ENCODE measurements at regions of chr2 and their contacts with region 1.

Region 1: DNA sequence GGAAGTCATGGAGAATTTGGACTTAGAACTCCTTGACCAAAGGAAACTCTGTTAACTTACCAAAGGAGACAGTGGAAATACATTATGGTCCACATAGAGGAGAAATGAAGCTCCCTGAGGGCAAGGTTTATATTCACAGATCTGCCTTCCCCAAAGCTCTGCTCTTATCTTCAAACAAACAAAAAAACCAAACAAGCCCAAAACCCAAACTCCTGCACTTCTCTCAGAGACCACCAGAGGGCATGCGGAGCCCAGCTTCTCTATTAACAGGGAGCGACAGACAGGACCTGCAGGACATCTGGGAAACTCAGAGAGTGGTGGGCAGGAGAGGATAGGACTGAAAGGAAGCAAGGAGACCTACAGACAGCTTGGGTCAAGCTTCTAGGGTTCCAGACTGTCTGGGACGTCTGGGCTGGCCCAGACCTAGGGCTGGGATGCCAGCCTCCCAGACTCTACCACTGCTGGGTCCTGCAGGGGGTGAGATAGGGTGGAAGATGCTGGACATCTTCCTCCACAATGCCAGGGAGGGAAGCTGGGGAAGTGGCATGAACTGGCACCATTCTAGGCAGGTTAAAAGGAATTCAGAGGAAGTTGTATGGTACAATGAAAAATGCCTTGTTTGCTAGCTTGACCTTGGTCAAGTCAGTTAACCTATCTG is 4.0 kb upstream of the WNT10A start:
- DNase-seq: peak; percentile 72 to 83 (median 76)
- H3K4me3 ChIP-seq: no peak overlapping the region
- H3K4me3 Mint-ChIP-seq: peak overlapping the region in 3 of 8 donors; percentile 15 to 62 (median 29)
- H3K27ac ChIP-seq: no peak overlapping the region
- H3K27ac Mint-ChIP-seq: peak overlapping the region; percentile 32 to 86 (median 65)
- H3K4me1 ChIP-seq: peaks cover 55% of the 10 kb centered on the region
- H3K4me1 Mint-ChIP-seq: peaks cover 29 to 61% (median 41%) of the 10 kb centered on the region in 4 donors
- H3K27me3 ChIP-seq: peaks cover 26% of the 10 kb centered on the region
- H3K27me3 Mint-ChIP-seq: peaks cover 22 to 30% of the 10 kb centered on the region in 2 donors

Region 2: GRCh38 chr2:218710687-218711549 is 165.8 kb before region 1 on chr2 and contains the start of gene TTLL4:
- CTCF ChIA-PET with region 1: no interaction called
- POLR2A ChIA-PET with region 1: interaction called, 9 read pairs
- intact Hi-C with region 1: loop called (anchors 1 kb)
- DNase-seq: peak; percentile 98 to 99 (median 99)
- H3K4me3 ChIP-seq: peak within 1 kb of the TSS; percentile 55 to 78
- H3K4me3 Mint-ChIP-seq: peak within 1 kb of the TSS; percentile 88 to 98 (median 95)
- H3K27ac ChIP-seq: peak within 1 kb of the TSS; percentile 81
- H3K27ac Mint-ChIP-seq: peak within 1 kb of the TSS; percentile 79 to 96 (median 93)
- H3K4me1 ChIP-seq: peaks cover 16% of the 10 kb centered on the region
- H3K4me1 Mint-ChIP-seq: peaks cover 14 to 26% (median 18%) of the 10 kb centered on the region in 4 donors
- H3K27me3 ChIP-seq: no peaks in the 10 kb centered on the region
- H3K27me3 Mint-ChIP-seq: peaks cover 0 to under 1% of the 10 kb centered on the region in 2 donors
- total RNA-seq, gene TTLL4: 23.1 to 26.1 TPM

Region 3: GRCh38 chr2:218861645-218862318 is 14.9 kb before region 1 on chr2:
- CTCF ChIA-PET with region 1: interaction called, 10 read pairs
- POLR2A ChIA-PET with region 1: no interaction called
- intact Hi-C with region 1: no loop called
- DNase-seq: no peak
- H3K4me3 ChIP-seq: no peak overlapping the region
- H3K4me3 Mint-ChIP-seq: peak overlapping the region in 4 of 8 donors; percentile 14 to 74 (median 24)
- H3K27ac ChIP-seq: no peak overlapping the region
- H3K27ac Mint-ChIP-seq: no peak overlapping the region
- H3K4me1 ChIP-seq: peaks cover 22% of the 10 kb centered on the region
- H3K4me1 Mint-ChIP-seq: peaks cover 12 to 32% (median 17%) of the 10 kb centered on the region in 4 donors
- H3K27me3 ChIP-seq: peaks cover 36% of the 10 kb centered on the region
- H3K27me3 Mint-ChIP-seq: peaks cover 44 to 65% of the 10 kb centered on the region in 2 donors

Region 4: GRCh38 chr2:218892693-218893348 is 16.1 kb after region 1 on chr2:
- CTCF ChIA-PET with region 1: interaction called, 1,167 read pairs
- POLR2A ChIA-PET with region 1: interaction called, 667 read pairs
- intact Hi-C with region 1: loop called (anchors 1 kb)
- DNase-seq: peak; percentile 89 to 96 (median 92)
- H3K4me3 ChIP-seq: peak overlapping the region; percentile 9 to 61
- H3K4me3 Mint-ChIP-seq: peak overlapping the region; percentile 76 to 87 (median 80)
- H3K27ac ChIP-seq: peak overlapping the region; percentile 93
- H3K27ac Mint-ChIP-seq: peak overlapping the region; percentile 94 to 99 (median 98)
- H3K4me1 ChIP-seq: peaks cover 66% of the 10 kb centered on the region
- H3K4me1 Mint-ChIP-seq: peaks cover 40 to 76% (median 50%) of the 10 kb centered on the region in 4 donors
- H3K27me3 ChIP-seq: no peaks in the 10 kb centered on the region
- H3K27me3 Mint-ChIP-seq: no peaks in the 10 kb centered on the region

Region 5: GRCh38 chr2:218898109-218898878 is 21.6 kb after region 1 on chr2:
- CTCF ChIA-PET with region 1: interaction called, 1,167 read pairs
- POLR2A ChIA-PET with region 1: interaction called, 667 read pairs
- intact Hi-C with region 1: loop called (anchors 1 kb)
- DNase-seq: peak; percentile 70 to 80 (median 71)
- H3K4me3 ChIP-seq: peak overlapping the region in 1 of 2 donors; percentile 64
- H3K4me3 Mint-ChIP-seq: peak overlapping the region; percentile 81 to 97 (median 84)
- H3K27ac ChIP-seq: peak overlapping the region; percentile 93
- H3K27ac Mint-ChIP-seq: peak overlapping the region; percentile 85 to 99 (median 95)
- H3K4me1 ChIP-seq: peaks cover 54% of the 10 kb centered on the region
- H3K4me1 Mint-ChIP-seq: peaks cover 33 to 49% (median 42%) of the 10 kb centered on the region in 4 donors
- H3K27me3 ChIP-seq: no peaks in the 10 kb centered on the region
- H3K27me3 Mint-ChIP-seq: peaks cover 8 to 17% of the 10 kb centered on the region in 2 donors

Region 6: GRCh38 chr2:218908721-218909619 is 32.3 kb after region 1 on chr2:
- CTCF ChIA-PET with region 1: interaction called, 1,167 read pairs
- POLR2A ChIA-PET with region 1: interaction called, 4 read pairs
- intact Hi-C with region 1: no loop called
- DNase-seq: peak; percentile 86 to 91 (median 87)
- H3K4me3 ChIP-seq: peak overlapping the region; percentile 64 to 68
- H3K4me3 Mint-ChIP-seq: peak overlapping the region; percentile 82 to 89 (median 87)
- H3K27ac ChIP-seq: peak overlapping the region; percentile 35
- H3K27ac Mint-ChIP-seq: peak overlapping the region; percentile 79 to 93 (median 84)
- H3K4me1 ChIP-seq: peaks cover 12% of the 10 kb centered on the region
- H3K4me1 Mint-ChIP-seq: peaks cover 1 to 22% (median 10%) of the 10 kb centered on the region in 4 donors
- H3K27me3 ChIP-seq: no peaks in the 10 kb centered on the region
- H3K27me3 Mint-ChIP-seq: peaks cover 7 to 15% of the 10 kb centered on the region in 2 donors

Region 7: DNA sequence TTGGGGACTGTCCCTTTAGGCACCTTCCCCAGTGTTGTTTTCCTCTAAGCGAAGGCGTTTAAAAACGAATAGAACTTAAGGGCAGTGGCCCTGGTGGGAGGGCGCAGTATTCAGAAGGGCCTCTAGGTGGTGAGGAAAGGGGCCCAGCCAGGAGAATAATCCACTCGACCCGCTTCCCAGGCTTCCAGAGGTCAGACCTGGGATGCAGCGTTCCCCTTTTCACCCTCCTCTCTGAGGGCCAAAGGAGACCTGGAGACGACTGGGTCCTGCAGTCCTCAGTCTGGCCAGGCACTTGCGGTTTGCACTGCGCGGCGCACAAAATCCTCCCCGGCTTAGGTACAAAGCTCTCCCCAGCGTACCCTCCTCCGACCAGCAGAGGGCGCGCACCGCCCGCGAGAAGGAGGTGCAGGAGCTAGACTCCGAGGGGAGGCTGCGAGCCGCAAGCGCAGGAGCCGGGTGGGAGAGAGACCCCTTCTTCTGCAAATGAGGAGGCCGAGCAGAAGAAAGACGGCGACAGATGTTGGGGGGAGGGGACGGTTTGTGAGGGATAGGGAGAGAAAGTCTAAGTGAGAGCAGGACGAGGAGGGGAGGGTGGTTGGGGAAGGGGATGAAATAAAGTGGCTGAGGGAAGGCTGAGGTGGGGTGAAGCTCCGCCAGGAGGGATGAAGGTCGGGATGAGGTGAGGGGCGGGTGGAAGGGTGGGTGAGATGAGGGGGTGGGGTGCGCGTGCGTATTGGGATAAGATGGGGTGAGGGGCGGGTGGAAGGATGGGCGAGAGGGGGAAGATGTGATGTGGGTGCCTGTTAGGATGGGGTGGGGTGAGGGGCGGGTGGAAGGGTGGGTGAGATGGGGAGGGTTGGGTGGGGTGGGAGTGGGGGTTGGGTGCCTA is 103.4 kb after region 1 on chr2:
- CTCF ChIA-PET with region 1: interaction called, 13 read pairs
- POLR2A ChIA-PET with region 1: no interaction called
- intact Hi-C with region 1: loop called (anchors 1 kb)
- DNase-seq: peak; percentile 80 to 84 (median 83)
- H3K4me3 ChIP-seq: peak overlapping the region in 1 of 2 donors; percentile 27
- H3K4me3 Mint-ChIP-seq: peak overlapping the region; percentile 54 to 93 (median 80)
- H3K27ac ChIP-seq: no peak overlapping the region
- H3K27ac Mint-ChIP-seq: peak overlapping the region in 3 of 7 donors; percentile 10 to 64 (median 12)
- H3K4me1 ChIP-seq: peaks cover 41% of the 10 kb centered on the region
- H3K4me1 Mint-ChIP-seq: peaks cover 14 to 45% (median 22%) of the 10 kb centered on the region in 4 donors
- H3K27me3 ChIP-seq: peaks cover 37% of the 10 kb centered on the region
- H3K27me3 Mint-ChIP-seq: peaks cover 63 to 69% of the 10 kb centered on the region in 2 donors

Region 8: DNA sequence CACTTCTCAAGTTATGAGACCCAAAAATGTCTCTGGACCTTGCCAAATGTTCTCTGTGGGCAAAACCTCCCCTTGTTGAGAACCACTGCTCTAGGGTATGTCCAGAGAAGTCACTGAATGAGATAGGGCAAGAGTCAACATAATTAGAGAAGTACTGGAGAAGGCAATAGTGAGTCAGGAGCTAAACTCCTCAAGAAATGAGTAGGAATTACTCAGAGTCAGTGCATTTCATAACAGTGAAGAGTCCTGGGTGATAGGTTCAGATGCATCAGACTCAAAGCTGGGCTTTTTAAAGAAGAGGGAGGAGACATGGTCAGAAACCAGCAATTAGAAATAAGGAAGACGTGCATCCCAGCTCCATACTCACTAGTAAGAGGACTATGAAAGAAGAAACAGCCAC is 222.6 kb after region 1 on chr2:
- CTCF ChIA-PET with region 1: no interaction called
- POLR2A ChIA-PET with region 1: no interaction called
- intact Hi-C with region 1: no loop called
- DNase-seq: no peak
- H3K4me3 ChIP-seq: no peak overlapping the region
- H3K4me3 Mint-ChIP-seq: no peak overlapping the region
- H3K27ac ChIP-seq: no peak overlapping the region
- H3K27ac Mint-ChIP-seq: no peak overlapping the region
- H3K4me1 ChIP-seq: no peaks in the 10 kb centered on the region
- H3K4me1 Mint-ChIP-seq: peaks cover 0 to 5% (median 0%) of the 10 kb centered on the region in 4 donors
- H3K27me3 ChIP-seq: no peaks in the 10 kb centered on the region
- H3K27me3 Mint-ChIP-seq: no peaks in the 10 kb centered on the region